Activated CD8-positive, alpha-beta T cell treated with anti-CD3 and anti-CD28 coated beads for 36 hours (primary cell): ENCODE measurements at regions of chr13 and their contacts with region 1.

Region 1: DNA sequence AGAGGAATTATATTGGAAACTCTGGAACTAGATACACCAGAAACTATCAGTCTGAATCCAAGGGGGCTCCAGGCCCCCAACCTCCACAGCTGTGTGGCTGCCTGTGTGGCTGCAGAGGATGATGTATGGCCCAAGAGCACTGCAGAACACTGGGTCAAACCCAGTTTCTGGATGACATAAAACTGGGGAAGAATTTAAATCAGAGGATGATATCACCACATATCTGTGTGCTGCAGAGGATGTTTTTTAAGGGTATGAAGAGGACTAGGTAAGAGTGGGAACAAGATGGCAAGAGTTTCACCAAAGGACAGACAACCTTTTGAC is 226.4 kb downstream of the SUCLA2 start:
- DNase-seq: no peak
- ATAC-seq: no peak
- H3K4me3 Mint-ChIP-seq: no peak overlapping the region
- H3K27ac Mint-ChIP-seq: no peak overlapping the region
- H3K4me1 Mint-ChIP-seq: no peaks in the 10 kb centered on the region
- H3K27me3 Mint-ChIP-seq: peaks cover 8% of the 10 kb centered on the region
- CTCF ChIP-seq: no peak

Region 2: DNA sequence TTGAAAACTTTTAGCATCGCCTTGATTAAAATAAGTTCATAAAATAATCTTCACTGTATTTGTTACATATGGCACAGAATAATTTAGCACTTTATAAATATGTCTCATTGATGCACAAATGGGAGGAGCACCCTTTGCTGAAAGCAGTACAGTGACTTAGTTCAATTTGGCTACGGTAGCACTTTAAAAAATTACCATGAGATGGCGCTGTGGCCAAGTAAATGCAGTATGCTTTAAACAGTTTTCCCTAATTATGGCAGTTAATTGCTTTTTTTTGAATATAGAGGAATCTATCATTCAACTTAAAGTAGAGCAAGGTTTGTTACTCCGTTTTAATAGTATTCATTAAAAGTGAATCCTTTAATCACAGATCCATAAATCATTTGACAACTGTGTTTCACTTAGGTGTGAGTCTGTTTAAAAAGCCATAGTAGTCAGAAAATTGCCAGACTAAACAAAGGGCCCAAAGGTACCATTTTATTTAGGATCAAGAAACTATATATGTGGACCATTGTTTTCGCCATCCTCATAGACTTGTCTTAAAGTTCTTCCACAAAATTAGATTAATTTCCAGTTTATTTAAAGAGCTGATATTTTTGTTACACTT is 942.9 kb before region 1 on chr13:
- CTCF ChIA-PET with region 1: interaction called, 7 read pairs
- POLR2A ChIA-PET with region 1: no interaction called
- intact Hi-C with region 1: loop called (anchors 5 kb)
- DNase-seq: peak; percentile 55
- ATAC-seq: no peak
- H3K4me3 Mint-ChIP-seq: no peak overlapping the region
- H3K27ac Mint-ChIP-seq: no peak overlapping the region
- H3K4me1 Mint-ChIP-seq: no peaks in the 10 kb centered on the region
- H3K27me3 Mint-ChIP-seq: peaks cover 1% of the 10 kb centered on the region
- CTCF ChIP-seq: peak; percentile 93

Region 3: DNA sequence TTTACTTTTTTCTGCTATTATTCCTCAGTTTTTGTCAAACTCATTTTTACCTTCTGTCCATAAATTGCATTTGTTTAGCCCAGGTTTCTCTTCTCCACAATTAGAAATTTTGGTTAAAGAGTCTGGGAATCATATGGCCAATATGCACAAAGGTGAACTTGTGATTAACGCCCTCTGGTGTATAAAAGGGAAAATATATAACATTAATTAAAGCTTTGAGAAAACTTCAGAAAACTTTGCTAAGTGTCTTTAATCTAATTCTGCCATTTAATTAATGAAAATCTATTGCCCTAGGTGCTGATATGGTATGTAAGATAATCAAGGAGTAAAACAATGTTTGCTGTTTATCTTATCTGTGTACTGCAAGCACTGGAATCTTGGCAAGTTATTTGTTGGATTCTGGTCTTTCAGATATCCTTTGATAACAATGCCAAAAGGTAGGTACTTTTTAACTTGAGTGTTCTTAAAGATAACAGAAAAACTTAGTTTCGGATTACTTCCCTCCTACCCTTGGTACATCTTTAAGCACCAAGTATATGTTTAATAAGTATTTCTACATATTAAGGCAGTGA is 176.2 kb before region 1 on chr13:
- CTCF ChIA-PET with region 1: interaction called, 3 read pairs
- POLR2A ChIA-PET with region 1: no interaction called
- intact Hi-C with region 1: loop called (anchors 10 kb)
- DNase-seq: no peak
- ATAC-seq: no peak
- H3K4me3 Mint-ChIP-seq: no peak overlapping the region
- H3K27ac Mint-ChIP-seq: no peak overlapping the region
- H3K4me1 Mint-ChIP-seq: no peaks in the 10 kb centered on the region
- H3K27me3 Mint-ChIP-seq: no peaks in the 10 kb centered on the region
- CTCF ChIP-seq: no peak